Activated CD8-positive, alpha-beta T cell treated with anti-CD3 and anti-CD28 coated beads for 36 hours (primary cell): ENCODE measurements at regions of chr5 and their contacts with region 1.

Region 1: DNA sequence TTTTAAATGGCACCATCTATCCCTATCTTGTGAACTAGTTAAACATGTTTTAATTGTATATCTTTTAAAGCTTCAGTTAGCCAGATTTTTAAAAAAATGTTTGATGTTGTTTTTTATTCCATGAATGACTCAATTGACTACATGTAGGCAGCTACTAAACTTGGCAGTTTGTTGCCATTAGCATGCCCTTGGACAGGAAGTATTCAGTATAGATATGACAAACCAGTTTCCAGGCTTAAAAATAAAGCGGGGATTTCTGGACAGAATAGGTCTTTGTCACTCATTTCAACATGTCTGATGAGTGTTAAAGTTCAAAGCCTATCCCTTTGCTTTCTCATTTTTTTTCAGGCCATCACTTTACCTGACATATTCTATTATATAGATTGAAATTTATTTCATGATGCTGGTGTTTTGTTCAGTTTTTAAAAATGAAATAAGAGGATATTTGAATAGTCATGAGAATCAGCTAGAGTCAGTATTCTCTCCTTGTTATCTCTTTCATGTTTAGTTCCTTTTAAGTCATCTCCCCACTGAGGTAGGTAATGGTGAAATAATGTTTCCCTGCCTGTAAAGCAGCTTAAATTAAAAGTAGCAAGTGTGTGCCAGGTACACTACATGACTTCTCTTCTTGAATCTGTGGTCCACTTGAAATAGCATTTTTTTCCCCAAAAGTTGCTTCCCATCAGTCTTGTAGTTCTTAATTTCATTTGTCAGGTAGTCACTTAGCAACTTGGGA is 11.9 kb downstream of the TNFAIP8 start:
- DNase-seq: peak; percentile 48
- ATAC-seq: peak; percentile 65
- H3K4me3 Mint-ChIP-seq: peak overlapping the region; percentile 67
- H3K27ac Mint-ChIP-seq: peak overlapping the region; percentile 99
- H3K4me1 Mint-ChIP-seq: peaks cover 81% of the 10 kb centered on the region
- H3K27me3 Mint-ChIP-seq: no peaks in the 10 kb centered on the region
- CTCF ChIP-seq: no peak

Region 2: DNA sequence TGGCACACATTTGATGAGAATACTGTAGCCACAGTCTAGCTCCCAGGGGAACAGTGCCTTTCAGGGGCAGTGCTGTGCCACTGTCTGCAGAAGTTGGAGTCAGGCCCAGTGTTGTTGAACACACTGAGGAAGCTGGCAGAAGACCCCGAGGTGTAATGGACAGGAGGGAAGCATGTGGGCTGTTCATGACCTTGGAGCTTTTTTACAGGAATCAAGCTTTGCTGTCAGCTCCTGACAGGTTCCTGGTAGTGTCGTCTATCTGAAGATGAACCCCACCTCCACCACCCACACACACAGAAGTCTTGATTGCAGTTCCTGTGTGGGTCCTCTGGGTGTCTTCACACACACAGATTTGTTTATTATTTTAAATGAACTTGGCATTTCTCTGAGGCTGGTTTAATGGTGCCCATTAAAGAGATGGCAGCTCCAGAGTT is 52.1 kb before region 1 on chr5:
- CTCF ChIA-PET with region 1: interaction called, 23 read pairs
- POLR2A ChIA-PET with region 1: interaction called, 8 read pairs
- intact Hi-C with region 1: no loop called
- DNase-seq: peak; percentile 84
- ATAC-seq: peak; percentile 79
- H3K4me3 Mint-ChIP-seq: peak overlapping the region; percentile 38
- H3K27ac Mint-ChIP-seq: peak overlapping the region; percentile 81
- H3K4me1 Mint-ChIP-seq: peaks cover 93% of the 10 kb centered on the region
- H3K27me3 Mint-ChIP-seq: no peaks in the 10 kb centered on the region
- CTCF ChIP-seq: peak; percentile 70

Region 3: GRCh38 chr5:119328753-119329602 is 38.7 kb before region 1 on chr5:
- CTCF ChIA-PET with region 1: interaction called, 4 read pairs
- POLR2A ChIA-PET with region 1: interaction called, 4 read pairs
- intact Hi-C with region 1: loop called (anchors 5 kb)
- DNase-seq: peak; percentile 80
- ATAC-seq: peak; percentile 73
- H3K4me3 Mint-ChIP-seq: peak overlapping the region; percentile 43
- H3K27ac Mint-ChIP-seq: peak overlapping the region; percentile 95
- H3K4me1 Mint-ChIP-seq: peaks cover 92% of the 10 kb centered on the region
- H3K27me3 Mint-ChIP-seq: no peaks in the 10 kb centered on the region
- CTCF ChIP-seq: no peak

Region 4: GRCh38 chr5:119355685-119356611 is 11.7 kb before region 1 on chr5 and contains the start of gene TNFAIP8:
- CTCF ChIA-PET with region 1: interaction called, 6 read pairs
- POLR2A ChIA-PET with region 1: interaction called, 52 read pairs
- intact Hi-C with region 1: no loop called
- DNase-seq: peak; percentile 85
- ATAC-seq: peak; percentile 63
- H3K4me3 Mint-ChIP-seq: peak within 1 kb of the TSS; percentile 98
- H3K27ac Mint-ChIP-seq: peak within 1 kb of the TSS; percentile 97
- H3K4me1 Mint-ChIP-seq: peaks cover 62% of the 10 kb centered on the region
- H3K27me3 Mint-ChIP-seq: no peaks in the 10 kb centered on the region
- CTCF ChIP-seq: no peak
- total RNA-seq, gene TNFAIP8: 135 to 141 TPM

Region 5: DNA sequence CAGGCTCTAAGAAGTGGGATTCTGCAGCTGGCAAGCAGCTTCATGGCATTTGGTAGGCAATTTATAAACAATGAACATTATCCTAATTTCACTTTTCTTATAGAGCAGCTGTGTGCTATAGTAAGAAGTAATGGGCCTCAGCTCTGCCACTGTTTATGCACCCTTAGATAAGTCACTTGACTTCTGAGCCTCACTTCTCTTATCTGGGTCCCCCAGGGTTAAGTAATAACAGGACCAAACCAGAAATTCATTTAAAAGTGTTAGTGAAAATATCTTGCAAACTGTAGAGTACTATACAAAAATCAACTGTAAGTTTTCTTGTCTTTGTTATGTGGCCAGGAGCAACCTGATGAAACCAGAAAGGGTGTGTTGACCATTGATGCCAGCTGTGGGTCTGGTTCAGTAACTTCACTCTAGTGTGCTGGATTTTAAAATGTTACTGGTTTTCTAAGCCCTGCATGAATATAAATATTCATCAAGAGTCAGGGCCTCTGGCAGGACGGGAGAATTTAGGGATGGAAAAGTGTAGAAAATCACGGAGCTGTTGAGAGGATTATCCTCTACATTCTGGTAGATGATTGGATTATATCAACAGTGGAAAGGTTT is 12.4 kb after region 1 on chr5:
- CTCF ChIA-PET with region 1: interaction called, 11 read pairs
- POLR2A ChIA-PET with region 1: interaction called, 71 read pairs
- intact Hi-C with region 1: no loop called
- DNase-seq: no peak
- ATAC-seq: no peak
- H3K4me3 Mint-ChIP-seq: no peak overlapping the region
- H3K27ac Mint-ChIP-seq: peak overlapping the region; percentile 93
- H3K4me1 Mint-ChIP-seq: peaks cover 81% of the 10 kb centered on the region
- H3K27me3 Mint-ChIP-seq: no peaks in the 10 kb centered on the region
- CTCF ChIP-seq: no peak